ENCODE measurements at regions of chr20 and their contacts with region 1.

Region 1: DNA sequence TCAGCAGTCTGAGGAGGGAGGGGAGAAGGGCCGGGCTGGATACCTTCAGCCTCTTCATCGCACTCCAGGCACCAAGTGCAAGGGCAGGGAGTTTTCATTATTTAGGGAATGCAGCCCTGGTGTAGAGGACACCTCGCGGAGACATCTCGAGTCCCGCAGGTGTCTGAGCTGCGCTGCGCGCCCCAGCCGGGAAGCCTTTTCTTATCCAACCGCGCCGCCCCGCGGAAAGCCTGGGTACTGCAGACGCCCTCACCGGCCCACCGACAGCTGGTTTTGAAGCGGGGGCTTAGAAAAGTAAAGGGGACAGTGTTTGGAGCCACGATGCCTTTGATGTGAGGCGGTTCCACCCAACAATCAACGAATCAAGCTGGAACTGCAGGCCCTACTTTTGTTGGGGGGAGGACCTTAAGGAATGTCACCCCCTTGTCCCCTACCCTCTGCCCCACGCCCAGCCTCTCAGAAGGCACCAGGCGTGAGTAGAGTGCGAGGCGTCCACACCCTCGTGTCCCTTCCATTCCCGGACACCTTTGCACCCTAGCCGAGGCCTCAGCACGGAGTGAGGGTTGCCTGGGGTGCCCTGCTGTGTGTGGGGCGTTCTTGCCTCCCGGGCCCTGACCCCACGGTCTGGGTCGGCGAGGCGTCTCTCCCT is 8.6 kb downstream of the NKX2-2 start:
- DNase-seq: peak in 41 of 42 donors; percentile 70 to 94 (median 84)

Region 2: DNA sequence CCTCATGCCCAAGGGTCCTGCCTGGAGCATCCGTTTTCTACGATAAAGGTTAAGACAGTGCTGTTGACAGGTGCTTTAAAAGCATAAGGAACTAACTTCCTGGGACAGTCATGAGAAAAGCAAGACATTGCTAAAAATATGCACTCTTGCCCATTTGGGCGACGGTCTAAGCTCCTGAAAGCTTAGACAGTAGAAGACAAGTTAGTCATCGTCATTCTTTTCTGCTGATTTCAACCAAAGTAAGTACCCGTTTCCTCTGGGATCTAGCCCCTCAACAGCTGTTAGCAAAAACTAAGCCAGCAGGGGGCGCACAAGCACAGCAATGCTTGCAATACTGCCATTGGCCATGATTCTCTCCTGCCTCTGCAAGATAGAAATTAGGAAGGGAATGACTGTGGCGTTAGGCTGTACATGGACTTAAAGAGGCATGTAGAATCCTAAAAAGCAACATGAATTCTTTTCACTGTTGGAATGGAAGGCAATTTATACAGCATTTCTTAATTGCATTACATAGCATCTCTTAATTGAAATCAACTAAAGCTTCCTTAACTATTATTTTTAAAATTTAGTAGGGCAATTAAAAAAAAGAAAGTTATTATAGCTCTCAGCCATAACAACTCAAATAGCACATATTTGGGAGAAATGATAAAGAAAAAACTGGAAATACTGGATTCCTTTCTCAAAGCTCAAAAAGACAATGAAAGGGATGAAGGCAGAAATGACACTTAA is 645.0 kb before region 1 on chr20:
- intact Hi-C with region 1: loop called (anchors 5 kb)
- DNase-seq: peak; percentile 81 to 99 (median 95)

Region 3: GRCh38 chr20:21303061-21303871 is 202.0 kb before region 1 on chr20 and contains the start of gene XRN2:
- intact Hi-C with region 1: loop called (anchors 10 kb)
- DNase-seq: peak; percentile 86 to 99 (median 96)

Region 4: GRCh38 chr20:21395666-21396598 is 109.4 kb before region 1 on chr20:
- intact Hi-C with region 1: loop called (anchors 10 kb)
- DNase-seq: no peak

Region 5: GRCh38 chr20:21534453-21534852 is 29.2 kb after region 1 on chr20:
- intact Hi-C with region 1: no loop called
- DNase-seq: peak in 1 of 42 donors; percentile 13